HEK293 (cell line): ENCODE measurements at regions of chr11 and their contacts with region 1.

Region 1: DNA sequence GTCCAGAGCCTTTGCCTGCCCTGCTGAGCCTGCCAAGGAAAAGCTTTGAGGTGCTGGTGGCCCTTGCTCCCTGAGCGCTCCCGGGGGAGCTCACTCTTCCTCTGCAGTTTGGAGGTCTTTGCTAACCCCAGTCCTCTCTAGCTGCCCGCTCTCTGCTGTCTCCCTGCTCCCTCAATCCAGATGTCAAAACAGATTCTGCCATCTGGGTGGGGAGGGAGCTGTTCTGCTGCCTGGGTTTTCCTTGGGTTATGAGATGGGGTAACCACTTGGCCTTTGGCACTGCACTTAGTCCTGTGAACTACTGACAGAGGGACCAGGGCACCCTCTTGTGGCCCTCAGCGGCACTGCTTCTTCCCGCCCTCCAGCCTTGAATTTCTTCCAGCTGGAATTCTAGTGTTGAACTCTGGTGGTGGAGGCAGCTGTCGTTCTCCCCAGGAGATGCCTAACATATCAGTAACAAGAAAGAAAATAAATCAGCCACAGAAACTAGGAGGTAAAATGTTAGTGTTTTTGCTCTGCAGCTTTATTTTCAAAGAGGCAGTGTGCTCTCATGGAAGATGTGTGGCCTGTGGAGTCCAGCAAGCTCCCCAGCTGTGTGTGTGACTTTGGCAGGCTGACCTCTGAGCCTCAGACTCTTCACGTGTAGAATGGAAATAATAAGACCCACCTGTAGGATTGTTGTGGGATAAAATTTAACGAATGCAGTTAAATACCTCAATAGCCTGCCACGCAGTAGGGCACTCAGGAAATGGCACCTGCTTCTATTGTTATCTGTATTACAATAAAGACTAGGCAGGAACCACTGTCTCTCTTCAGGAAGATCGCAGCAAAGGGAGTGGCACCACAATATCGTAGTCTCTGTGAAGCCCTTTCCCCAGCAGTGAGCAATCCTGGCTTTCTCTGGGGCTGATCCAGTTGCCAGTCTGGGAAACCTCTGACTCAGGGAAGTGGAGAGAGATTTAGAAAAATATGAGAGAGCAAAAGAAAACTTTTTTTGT is 23.4 kb downstream of the ARFGAP2 start:
- H3K4me3 ChIP-seq: no peak overlapping the region
- H3K27ac ChIP-seq: no peak overlapping the region
- H3K4me1 ChIP-seq: no peaks in the 10 kb centered on the region
- CTCF ChIP-seq: peak; percentile 71

Region 2: GRCh38 chr11:46889689-46890475 is 263.4 kb before region 1 on chr11:
- CTCF ChIA-PET with region 1: interaction called, 48 read pairs
- POLR2A ChIA-PET with region 1: interaction called, 3 read pairs
- H3K4me3 ChIP-seq: no peak overlapping the region
- H3K27ac ChIP-seq: no peak overlapping the region
- H3K4me1 ChIP-seq: no peaks in the 10 kb centered on the region
- CTCF ChIP-seq: peak; percentile 57; the same call in 1 of the 2 replicates

Region 3: GRCh38 chr11:46896719-46897406 is 256.4 kb before region 1 on chr11:
- CTCF ChIA-PET with region 1: interaction called, 48 read pairs
- POLR2A ChIA-PET with region 1: no interaction called
- H3K4me3 ChIP-seq: no peak overlapping the region
- H3K27ac ChIP-seq: no peak overlapping the region
- H3K4me1 ChIP-seq: no peaks in the 10 kb centered on the region
- CTCF ChIP-seq: no peak

Region 4: DNA sequence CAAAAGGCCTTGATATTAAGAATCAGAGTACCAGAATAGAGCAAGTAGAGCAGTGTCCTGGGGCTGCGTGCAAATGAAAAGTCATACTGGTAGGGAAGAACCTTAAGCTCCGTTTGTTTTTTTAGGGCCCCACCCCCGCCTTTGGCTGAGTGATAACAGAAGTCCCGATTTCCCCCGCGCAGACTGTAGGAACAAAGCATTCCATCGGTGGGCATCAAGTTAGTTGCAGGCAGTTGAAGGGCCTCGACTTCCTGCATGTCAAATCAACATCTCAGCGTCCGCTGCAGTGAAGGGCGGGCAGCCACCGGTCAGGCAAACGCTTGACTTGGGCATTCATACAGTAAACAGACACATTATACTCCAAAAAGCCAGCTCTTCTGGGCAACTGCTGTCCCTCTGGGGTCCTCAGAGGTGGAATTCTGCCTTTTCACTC is 246.6 kb before region 1 on chr11:
- CTCF ChIA-PET with region 1: interaction called, 31 read pairs
- POLR2A ChIA-PET with region 1: no interaction called
- H3K4me3 ChIP-seq: no peak overlapping the region
- H3K27ac ChIP-seq: peak overlapping the region; percentile 8; the same call in 1 of the 2 replicates
- H3K4me1 ChIP-seq: 0 out of 2 replicates have a peak, but pooled peaks cover 4% of the 10 kb centered on the region
- CTCF ChIP-seq: no peak

Region 5: DNA sequence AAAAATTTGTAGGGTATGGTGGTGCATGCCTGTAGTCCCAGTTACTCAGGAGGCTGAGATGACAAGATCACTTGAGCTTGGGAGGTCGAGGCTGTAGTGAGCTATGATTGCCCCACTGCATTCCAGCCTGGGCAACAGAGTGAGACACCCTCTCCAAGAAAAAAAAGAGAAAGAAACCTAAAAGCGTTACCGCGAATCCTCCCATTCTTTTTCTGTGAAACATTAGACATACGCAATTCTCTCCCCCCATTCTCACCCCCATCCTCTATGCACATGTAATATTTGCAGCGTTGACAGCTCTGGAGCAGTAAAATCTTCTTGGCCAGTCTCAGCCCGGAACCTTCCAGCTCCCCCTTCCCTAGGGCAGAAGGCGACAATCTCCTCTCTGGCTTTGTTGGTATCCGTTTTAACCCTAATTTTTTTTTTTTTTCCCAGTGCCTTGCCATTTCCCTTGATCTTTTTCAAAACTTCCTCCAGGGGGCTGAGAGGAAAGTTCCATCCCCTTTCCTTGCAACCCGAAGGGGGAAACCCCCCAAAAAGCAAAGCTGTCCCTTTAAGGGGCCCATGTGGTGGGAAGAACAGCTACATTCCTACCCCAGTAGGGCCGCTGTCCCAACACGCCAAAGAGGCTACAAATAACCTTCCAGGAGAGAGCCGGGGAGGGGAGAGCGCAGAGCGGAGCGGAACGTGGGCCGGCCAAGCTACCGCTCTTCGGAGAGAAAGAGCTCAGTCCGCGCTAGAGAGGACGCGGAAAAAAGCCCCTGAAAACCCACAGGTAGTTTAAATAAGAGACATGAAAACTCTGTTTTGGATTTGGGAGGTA is 236.8 kb before region 1 on chr11:
- CTCF ChIA-PET with region 1: interaction called, 31 read pairs
- POLR2A ChIA-PET with region 1: no interaction called
- H3K4me3 ChIP-seq: peak overlapping the region; percentile 71
- H3K27ac ChIP-seq: no peak overlapping the region
- H3K4me1 ChIP-seq: peaks cover 6% of the 10 kb centered on the region
- CTCF ChIP-seq: peak; percentile 53

Region 6: GRCh38 chr11:47130543-47130942 is 22.7 kb before region 1 on chr11:
- CTCF ChIA-PET with region 1: interaction called, 22 read pairs
- POLR2A ChIA-PET with region 1: no interaction called
- H3K4me3 ChIP-seq: no peak overlapping the region
- H3K27ac ChIP-seq: no peak overlapping the region
- H3K4me1 ChIP-seq: no peaks in the 10 kb centered on the region
- CTCF ChIP-seq: no peak

Region 7: DNA sequence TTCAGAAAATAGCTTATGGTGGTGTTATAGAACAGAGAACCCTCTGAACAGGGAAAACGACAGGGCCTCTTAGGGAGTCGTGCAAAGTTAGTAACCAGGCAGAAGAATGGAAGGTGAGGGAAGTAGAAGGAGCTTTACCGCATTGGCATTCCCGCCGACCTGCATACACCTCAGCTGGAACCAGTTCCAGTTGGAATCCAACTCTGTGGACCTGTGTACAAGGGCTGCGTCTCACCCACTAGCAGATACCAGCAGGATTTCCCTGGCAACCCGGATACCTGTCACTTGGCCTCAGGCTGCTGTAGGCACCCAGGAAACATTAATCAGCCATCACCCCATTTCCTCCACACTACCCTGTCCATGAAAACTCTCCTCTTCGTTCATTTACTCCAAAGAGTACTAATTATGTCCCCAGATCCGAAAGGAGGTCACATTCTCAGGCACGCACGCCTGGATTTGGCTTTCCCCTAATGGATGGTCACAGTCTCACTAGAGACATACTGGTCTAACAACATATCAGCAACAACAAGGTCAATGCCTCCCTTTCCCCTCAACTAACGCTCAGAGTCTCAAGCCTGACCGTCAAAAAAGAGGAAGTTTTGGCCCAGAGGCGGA is 22.6 kb after region 1 on chr11:
- CTCF ChIA-PET with region 1: no interaction called
- POLR2A ChIA-PET with region 1: no interaction called
- H3K4me3 ChIP-seq: peak overlapping the region; percentile 97
- H3K27ac ChIP-seq: peak overlapping the region; percentile 70; the same call in 1 of the 2 replicates
- H3K4me1 ChIP-seq: no peaks in the 10 kb centered on the region
- CTCF ChIP-seq: no peak

Region 8: GRCh38 chr11:47538741-47539574 is 385.7 kb after region 1 on chr11:
- CTCF ChIA-PET with region 1: no interaction called
- POLR2A ChIA-PET with region 1: no interaction called
- H3K4me3 ChIP-seq: no peak overlapping the region
- H3K27ac ChIP-seq: no peak overlapping the region
- H3K4me1 ChIP-seq: peaks cover 17% of the 10 kb centered on the region
- CTCF ChIP-seq: no peak